Activated CD4-positive, alpha-beta memory T cell treated with anti-CD3 and anti-CD28 coated beads for 36 hours (primary cell): ENCODE measurements at regions of chr2 and their contacts with region 1.

Region 1: GRCh38 chr2:30336978-30337841 is 105.9 kb downstream of the LBH start:
- DNase-seq: peak; percentile 83
- H3K4me3 Mint-ChIP-seq: peak overlapping the region; percentile 68
- H3K27ac Mint-ChIP-seq: peak overlapping the region; percentile 96
- H3K4me1 Mint-ChIP-seq: peaks cover 75% of the 10 kb centered on the region
- H3K27me3 Mint-ChIP-seq: no peaks in the 10 kb centered on the region

Region 2: GRCh38 chr2:29579495-29580169 is 757.6 kb before region 1 on chr2:
- CTCF ChIA-PET with region 1: no interaction called
- POLR2A ChIA-PET with region 1: no interaction called
- intact Hi-C with region 1: no loop called
- DNase-seq: no peak
- H3K4me3 Mint-ChIP-seq: no peak overlapping the region
- H3K27ac Mint-ChIP-seq: no peak overlapping the region
- H3K4me1 Mint-ChIP-seq: no peaks in the 10 kb centered on the region
- H3K27me3 Mint-ChIP-seq: peaks cover 4% of the 10 kb centered on the region

Region 3: GRCh38 chr2:30231212-30231995 is 105.8 kb before region 1 on chr2 and contains the start of gene LBH:
- CTCF ChIA-PET with region 1: interaction called, 5 read pairs
- POLR2A ChIA-PET with region 1: interaction called, 9 read pairs
- intact Hi-C with region 1: loop called (anchors 1 kb)
- DNase-seq: peak; percentile 94
- H3K4me3 Mint-ChIP-seq: peak within 1 kb of the TSS; percentile 84
- H3K27ac Mint-ChIP-seq: peak within 1 kb of the TSS; percentile 94
- H3K4me1 Mint-ChIP-seq: peaks cover 63% of the 10 kb centered on the region
- H3K27me3 Mint-ChIP-seq: no peaks in the 10 kb centered on the region
- total RNA-seq, gene LBH: 109 to 112 TPM

Region 4: GRCh38 chr2:30305235-30305634 is 32.0 kb before region 1 on chr2:
- CTCF ChIA-PET with region 1: interaction called, 3 read pairs
- POLR2A ChIA-PET with region 1: interaction called, 4 read pairs
- intact Hi-C with region 1: loop called (anchors 1 kb)
- DNase-seq: peak; percentile 23
- H3K4me3 Mint-ChIP-seq: no peak overlapping the region
- H3K27ac Mint-ChIP-seq: peak overlapping the region; percentile 73
- H3K4me1 Mint-ChIP-seq: peaks cover 24% of the 10 kb centered on the region
- H3K27me3 Mint-ChIP-seq: no peaks in the 10 kb centered on the region

Region 5: GRCh38 chr2:30366199-30366691 is 29.0 kb after region 1 on chr2:
- CTCF ChIA-PET with region 1: interaction called, 6 read pairs
- POLR2A ChIA-PET with region 1: interaction called, 4 read pairs
- intact Hi-C with region 1: loop called (anchors 2 kb)
- DNase-seq: peak; percentile 73
- H3K4me3 Mint-ChIP-seq: no peak overlapping the region
- H3K27ac Mint-ChIP-seq: peak overlapping the region; percentile 46
- H3K4me1 Mint-ChIP-seq: peaks cover 35% of the 10 kb centered on the region
- H3K27me3 Mint-ChIP-seq: no peaks in the 10 kb centered on the region